Naive thymus-derived CD8-positive, alpha-beta T cell (primary cell): ENCODE measurements at regions of chr17 and their contacts with region 1.

Region 1: DNA sequence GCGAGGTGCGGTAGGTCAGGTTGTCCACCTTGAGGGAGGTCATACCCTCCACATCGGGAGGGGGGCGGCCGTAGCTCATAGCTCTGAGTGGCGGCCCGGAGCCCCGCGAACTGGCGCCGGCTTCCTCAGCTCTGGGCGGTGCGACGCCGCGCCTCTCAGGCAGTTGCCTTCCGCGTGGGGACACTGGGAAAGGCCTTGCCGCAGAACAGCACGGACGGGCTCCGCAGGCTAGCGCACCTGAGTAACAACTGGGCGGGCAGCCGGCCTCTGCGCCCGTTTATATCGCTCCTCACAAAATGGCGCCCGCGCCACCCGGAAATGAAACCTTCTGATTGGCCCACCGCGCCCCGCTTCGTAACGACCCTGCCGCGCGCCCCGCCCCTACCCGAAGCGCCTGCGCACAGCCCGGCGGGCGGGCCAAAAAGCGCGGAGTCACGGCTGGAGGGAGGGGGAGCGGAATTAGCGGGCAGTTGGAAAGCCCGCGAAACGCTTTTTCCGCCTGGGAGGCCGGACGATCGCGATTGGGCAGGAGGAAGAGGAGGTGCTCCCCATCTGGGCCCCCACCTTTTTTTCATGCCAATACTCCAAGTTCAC is at the start of gene SRSF2:
- DNase-seq: peak; percentile 96 to 100 (median 99)
- ATAC-seq: peak; percentile 69 to 71
- H3K4me3 Mint-ChIP-seq: peak within 1 kb of the TSS; percentile 95 to 98 (median 96)
- H3K27ac Mint-ChIP-seq: peak within 1 kb of the TSS; percentile 96 to 100 (median 98)
- H3K4me1 Mint-ChIP-seq: peaks cover 34 to 65% (median 55%) of the 10 kb centered on the region in 4 donors
- H3K27me3 Mint-ChIP-seq: no peaks in the 10 kb centered on the region
- polyA plus RNA-seq, gene SRSF2: 101 to 106 (median 105) TPM

Region 2: GRCh38 chr17:76671123-76671911 is 65.9 kb before region 1 on chr17:
- POLR2A ChIA-PET with region 1: interaction called, 10 read pairs
- DNase-seq: peak; percentile 92 to 100 (median 98)
- ATAC-seq: peak; percentile 95 to 98
- H3K4me3 Mint-ChIP-seq: peak overlapping the region; percentile 86 to 97 (median 93)
- H3K27ac Mint-ChIP-seq: peak overlapping the region; percentile 95 to 99 (median 98)
- H3K4me1 Mint-ChIP-seq: peaks cover 20 to 54% (median 42%) of the 10 kb centered on the region in 4 donors
- H3K27me3 Mint-ChIP-seq: peaks cover 0 to 1% (median 0%) of the 10 kb centered on the region in 5 donors

Region 3: DNA sequence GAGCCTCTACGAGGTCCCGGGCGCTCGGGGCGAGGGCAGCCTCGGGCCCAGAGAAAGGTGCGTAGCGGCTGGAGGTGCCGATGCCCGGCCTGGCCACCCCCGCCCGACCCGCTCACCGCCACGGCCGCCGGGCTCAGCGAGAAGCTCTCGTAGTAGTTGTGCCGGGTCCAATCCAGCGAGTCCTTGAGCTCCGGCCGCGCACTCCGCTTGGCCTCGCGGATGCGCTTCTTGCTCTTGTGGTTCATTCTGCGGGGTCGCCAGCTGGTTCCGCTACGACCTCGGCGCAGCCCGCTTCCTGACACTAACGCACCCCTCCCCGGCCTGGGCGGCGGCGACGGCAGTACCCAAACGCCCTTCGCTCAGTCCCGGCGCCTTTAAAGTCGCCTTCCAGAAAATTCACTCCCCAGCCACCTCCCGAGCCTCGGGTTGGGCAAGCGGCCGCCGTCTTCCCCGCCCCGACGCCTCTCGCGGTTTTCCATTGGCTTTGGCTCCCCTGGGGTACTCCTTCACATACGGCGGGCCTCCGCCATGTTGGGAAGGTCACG is 10.9 kb before region 1 on chr17 and contains the start of gene JMJD6:
- POLR2A ChIA-PET with region 1: interaction called, 184 read pairs
- DNase-seq: peak in 5 of 10 donors; percentile 91 to 97 (median 94)
- ATAC-seq: peak; percentile 81 to 85
- H3K4me3 Mint-ChIP-seq: peak within 1 kb of the TSS; percentile 91 to 99 (median 97)
- H3K27ac Mint-ChIP-seq: peak within 1 kb of the TSS; percentile 91 to 99 (median 98)
- H3K4me1 Mint-ChIP-seq: peaks cover 13 to 75% (median 59%) of the 10 kb centered on the region in 4 donors
- H3K27me3 Mint-ChIP-seq: no peaks in the 10 kb centered on the region
- polyA plus RNA-seq, gene JMJD6: 10.2 to 34.2 (median 14.4) TPM

Region 4: DNA sequence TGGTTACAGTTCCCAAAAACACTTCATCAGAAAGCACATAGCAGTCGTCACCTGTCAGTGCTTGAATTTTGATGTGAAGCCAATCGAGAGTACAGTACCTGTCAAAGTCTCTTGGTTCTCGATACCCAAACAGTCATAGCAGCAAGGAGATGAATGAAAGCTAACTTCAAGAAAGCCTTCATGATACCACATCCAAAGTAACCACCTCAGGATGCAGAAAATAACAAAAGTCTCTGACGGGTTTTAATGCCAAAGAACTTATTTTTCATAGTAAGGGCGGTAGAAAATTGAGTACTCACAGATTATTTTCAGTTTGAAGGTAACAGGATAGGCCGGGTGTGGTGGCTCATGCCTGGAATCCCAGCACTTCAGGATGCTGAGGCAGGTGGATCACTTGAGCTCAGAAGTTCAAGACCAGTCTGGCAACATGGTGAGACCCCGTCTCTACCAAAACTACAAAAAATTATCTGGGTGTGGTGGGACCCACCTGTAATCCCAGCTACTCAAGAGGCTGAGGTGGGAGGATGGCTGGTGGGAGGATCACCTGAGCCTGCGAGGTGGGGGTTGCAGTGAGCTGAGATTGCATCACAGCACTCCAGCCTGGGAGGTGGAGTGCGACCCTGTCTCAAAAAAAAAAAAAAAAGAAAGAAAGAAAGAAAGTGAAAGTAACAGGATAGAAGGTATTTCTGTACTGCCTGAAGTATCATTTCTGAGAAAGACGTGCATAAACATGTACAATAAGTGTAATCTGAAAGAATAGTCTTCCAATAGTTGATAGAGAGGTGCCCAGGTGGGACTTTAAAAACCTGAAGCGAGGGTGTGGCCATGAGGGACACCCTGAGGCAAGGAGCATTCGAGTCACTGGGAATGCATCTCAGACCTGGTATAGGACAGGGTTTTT is 16.1 kb after region 1 on chr17:
- POLR2A ChIA-PET with region 1: interaction called, 109 read pairs
- DNase-seq: peak in 9 of 10 donors; percentile 23 to 92 (median 71)
- ATAC-seq: peak; percentile 90 to 94
- H3K4me3 Mint-ChIP-seq: peak overlapping the region; percentile 84 to 96 (median 90)
- H3K27ac Mint-ChIP-seq: peak overlapping the region; percentile 90 to 100 (median 99)
- H3K4me1 Mint-ChIP-seq: peaks cover 14 to 25% (median 24%) of the 10 kb centered on the region in 4 donors
- H3K27me3 Mint-ChIP-seq: no peaks in the 10 kb centered on the region

Region 5: GRCh38 chr17:77088455-77089123 is 351.4 kb after region 1 on chr17:
- POLR2A ChIA-PET with region 1: interaction called, 16 read pairs
- DNase-seq: peak; percentile 61 to 92 (median 84)
- ATAC-seq: peak; percentile 91 to 92
- H3K4me3 Mint-ChIP-seq: peak overlapping the region; percentile 87 to 100 (median 97)
- H3K27ac Mint-ChIP-seq: peak overlapping the region; percentile 94 to 99 (median 99)
- H3K4me1 Mint-ChIP-seq: peaks cover 19 to 62% (median 50%) of the 10 kb centered on the region in 4 donors
- H3K27me3 Mint-ChIP-seq: peaks cover 0 to 7% (median 0%) of the 10 kb centered on the region in 5 donors